Activated naive CD4-positive, alpha-beta T cell treated with anti-CD3 and anti-CD28 coated beads for 36 hours (primary cell): ENCODE measurements at regions of chr9 and their contacts with region 1.

Region 1: DNA sequence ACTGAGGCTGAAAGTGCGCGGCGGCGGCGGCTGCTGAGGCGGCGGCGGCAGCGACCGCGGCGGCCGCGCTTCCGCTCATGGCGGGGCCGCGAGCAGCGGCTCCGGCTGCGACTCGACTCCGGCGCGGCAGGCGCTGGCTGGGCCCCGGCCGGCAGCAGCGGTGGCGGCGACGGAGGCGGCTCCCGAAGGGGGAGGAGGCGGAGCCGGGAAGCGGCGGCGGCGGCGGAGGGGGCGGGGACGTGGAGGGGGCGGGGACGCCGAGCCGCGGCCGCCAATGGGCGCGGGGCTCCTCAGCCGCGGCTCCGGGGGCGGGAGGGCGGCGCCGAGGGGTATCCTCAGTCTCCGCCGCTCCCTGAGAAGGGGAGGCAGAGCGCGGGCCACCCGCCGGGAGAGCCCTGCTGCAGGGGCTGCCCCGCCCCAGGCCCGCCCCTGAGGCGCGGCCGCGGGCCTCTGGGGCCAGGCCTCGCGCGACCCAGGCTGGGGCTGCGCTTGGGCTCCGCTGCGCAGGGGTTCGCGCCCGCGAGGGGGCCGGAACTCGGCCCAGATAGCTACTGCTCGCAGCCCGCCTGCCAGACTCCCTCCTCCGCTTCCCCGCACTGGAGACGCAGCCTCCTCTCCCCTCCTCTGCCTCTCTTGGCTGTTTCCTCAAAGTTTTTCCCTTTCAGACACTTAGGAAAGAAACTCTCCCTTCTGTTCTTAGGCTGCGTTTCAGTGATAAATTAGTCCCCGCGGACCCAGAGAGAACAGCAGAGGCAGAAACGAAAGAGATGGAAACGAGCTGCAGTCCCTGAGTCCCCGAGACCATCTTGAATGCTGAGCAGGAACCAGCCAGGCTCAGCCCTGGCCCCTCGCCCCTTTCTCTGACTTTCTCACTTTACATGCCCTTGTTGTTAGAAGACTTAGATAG is 85.0 kb upstream of the MELK start:
- DNase-seq: peak; percentile 87
- H3K4me3 Mint-ChIP-seq: peak overlapping the region; percentile 90
- H3K27ac Mint-ChIP-seq: peak overlapping the region; percentile 98
- H3K4me1 Mint-ChIP-seq: peaks cover 61% of the 10 kb centered on the region
- H3K27me3 Mint-ChIP-seq: no peaks in the 10 kb centered on the region

Region 2: GRCh38 chr9:35657546-35658136 is 830.1 kb before region 1 on chr9 and contains the start of gene RMRP:
- CTCF ChIA-PET with region 1: no interaction called
- intact Hi-C with region 1: loop called (anchors 10 kb)
- DNase-seq: peak; percentile 93
- H3K4me3 Mint-ChIP-seq: peak within 1 kb of the TSS; percentile 84
- H3K27ac Mint-ChIP-seq: peak within 1 kb of the TSS; percentile 94
- H3K4me1 Mint-ChIP-seq: peaks cover 60% of the 10 kb centered on the region
- H3K27me3 Mint-ChIP-seq: peaks cover 3% of the 10 kb centered on the region
- total RNA-seq, gene RMRP: 7,381 to 12,571 TPM

Region 3: DNA sequence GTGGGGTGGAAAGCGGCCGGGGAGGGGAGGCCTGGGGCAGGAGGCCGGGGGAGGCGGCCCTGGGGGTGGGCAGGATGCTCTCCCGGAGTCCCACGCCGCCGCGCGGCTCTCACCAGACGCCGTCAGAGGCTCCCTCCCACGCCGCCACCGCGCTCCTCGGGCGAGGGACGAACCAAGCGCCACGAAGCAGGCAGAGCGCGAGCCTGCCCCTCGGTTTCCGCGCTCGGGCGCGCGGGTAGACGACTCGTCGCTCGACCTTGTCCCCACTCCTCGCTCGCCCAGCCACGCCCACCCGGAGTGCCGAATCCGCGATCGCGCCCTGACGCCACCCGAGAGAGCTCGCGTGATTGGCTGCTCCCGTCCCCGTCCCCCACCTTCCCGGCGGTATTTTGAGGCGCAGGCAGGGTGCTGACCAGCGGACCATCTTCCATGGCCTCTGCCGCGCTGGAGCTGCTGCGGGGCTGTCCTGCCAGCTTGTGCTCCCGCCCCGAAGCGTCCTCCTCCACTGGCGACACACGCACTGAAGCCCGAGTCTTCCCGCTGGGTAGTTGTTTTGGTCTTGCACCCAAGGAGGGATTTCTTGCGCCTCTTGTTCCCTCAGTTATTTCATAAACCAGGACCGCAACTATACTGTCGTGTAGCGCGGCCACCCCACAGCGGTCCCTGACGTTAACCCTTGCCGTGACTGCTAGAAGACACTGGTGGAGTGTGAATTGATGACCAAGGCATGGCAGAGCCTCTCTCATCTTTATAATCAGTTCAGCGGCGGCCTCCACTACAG is 229.3 kb before region 1 on chr9 and contains the start of gene GNE:
- CTCF ChIA-PET with region 1: no interaction called
- intact Hi-C with region 1: loop called (anchors 5 kb)
- DNase-seq: peak; percentile 97
- H3K4me3 Mint-ChIP-seq: peak within 1 kb of the TSS; percentile 93
- H3K27ac Mint-ChIP-seq: peak within 1 kb of the TSS; percentile 81
- H3K4me1 Mint-ChIP-seq: peaks cover 14% of the 10 kb centered on the region
- H3K27me3 Mint-ChIP-seq: no peaks in the 10 kb centered on the region
- total RNA-seq, gene GNE: 14.5 to 15.2 TPM

Region 4: GRCh38 chr9:36461323-36461722 is 26.4 kb before region 1 on chr9:
- CTCF ChIA-PET with region 1: no interaction called
- intact Hi-C with region 1: loop called (anchors 1 kb)
- DNase-seq: no peak
- H3K4me3 Mint-ChIP-seq: no peak overlapping the region
- H3K27ac Mint-ChIP-seq: no peak overlapping the region
- H3K4me1 Mint-ChIP-seq: peaks cover 46% of the 10 kb centered on the region
- H3K27me3 Mint-ChIP-seq: no peaks in the 10 kb centered on the region

Region 5: GRCh38 chr9:36543916-36544315 is 56.2 kb after region 1 on chr9:
- CTCF ChIA-PET with region 1: no interaction called
- intact Hi-C with region 1: no loop called
- DNase-seq: no peak
- H3K4me3 Mint-ChIP-seq: no peak overlapping the region
- H3K27ac Mint-ChIP-seq: no peak overlapping the region
- H3K4me1 Mint-ChIP-seq: no peaks in the 10 kb centered on the region
- H3K27me3 Mint-ChIP-seq: no peaks in the 10 kb centered on the region

Region 6: DNA sequence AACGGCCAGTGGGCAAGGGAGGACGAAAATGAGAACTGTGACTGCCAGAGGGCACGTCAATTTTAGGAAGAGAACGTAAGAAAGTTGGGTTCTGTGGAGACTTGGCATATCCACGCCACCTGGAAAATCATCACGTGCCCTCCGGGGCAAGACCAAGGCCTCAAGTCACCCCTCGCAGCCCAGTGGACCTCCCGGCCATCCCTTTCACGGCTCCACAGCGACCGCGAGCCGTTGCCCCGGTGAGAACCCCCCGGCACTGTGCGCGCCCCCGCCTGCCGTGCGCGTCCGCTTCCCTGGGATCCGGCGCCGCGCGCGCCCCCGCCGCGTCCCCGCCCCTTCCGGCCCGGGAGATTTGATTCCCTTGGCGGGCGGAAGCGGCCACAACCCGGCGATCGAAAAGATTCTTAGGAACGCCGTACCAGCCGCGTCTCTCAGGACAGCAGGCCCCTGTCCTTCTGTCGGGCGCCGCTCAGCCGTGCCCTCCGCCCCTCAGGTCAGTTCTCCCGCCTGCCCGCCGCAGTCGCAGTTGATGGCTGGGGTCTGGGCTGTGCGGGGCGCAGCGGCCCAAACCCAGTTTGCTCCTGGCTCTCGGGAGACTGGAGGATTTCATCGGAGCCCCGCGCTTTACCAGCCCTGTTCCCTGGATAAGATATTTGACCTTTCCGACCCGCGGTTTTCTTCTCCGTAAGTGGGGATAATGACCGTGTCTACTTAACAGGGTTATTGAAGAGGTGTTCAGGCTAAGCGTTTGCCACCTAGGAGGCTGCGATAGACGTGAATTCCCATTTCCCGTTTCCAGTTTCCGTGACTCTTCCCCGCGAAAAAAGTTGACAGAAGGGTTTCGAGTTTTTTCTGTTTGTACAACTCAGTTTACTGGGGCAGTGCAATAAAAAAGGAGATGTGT is 85.0 kb after region 1 on chr9 and contains the start of gene MELK:
- CTCF ChIA-PET with region 1: no interaction called
- intact Hi-C with region 1: loop called (anchors 2 kb)
- DNase-seq: peak; percentile 86
- H3K4me3 Mint-ChIP-seq: peak within 1 kb of the TSS; percentile 95
- H3K27ac Mint-ChIP-seq: peak within 1 kb of the TSS; percentile 81
- H3K4me1 Mint-ChIP-seq: peaks cover 27% of the 10 kb centered on the region
- H3K27me3 Mint-ChIP-seq: no peaks in the 10 kb centered on the region
- total RNA-seq, gene MELK: 53.9 to 55.3 TPM